IMR-90 (cell line): ENCODE measurements at regions of chr21 and their contacts with region 1.

Region 1: DNA sequence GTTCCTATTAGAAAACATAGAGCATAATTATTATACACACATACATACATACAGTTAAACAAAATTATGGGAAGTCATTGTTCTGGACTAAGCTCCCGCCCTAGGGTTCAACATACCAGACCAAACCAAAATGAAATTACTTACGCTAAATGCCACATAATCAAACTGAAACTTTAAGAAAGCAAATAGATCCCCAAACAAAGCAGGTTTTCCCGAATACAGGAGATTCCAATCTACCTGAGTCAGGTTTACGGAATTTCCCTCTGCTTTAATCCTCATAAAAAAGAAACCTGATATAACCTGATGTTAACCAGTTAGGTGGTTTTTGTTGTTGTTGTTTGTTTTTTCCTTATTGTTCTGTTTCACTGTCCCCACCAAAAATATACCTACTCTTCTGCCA is 1886.9 kb downstream of the NCAM2 start:
- DNase-seq: no peak
- ATAC-seq: no peak
- H3K4me3 ChIP-seq: no peak overlapping the region
- H3K27ac ChIP-seq: no peak overlapping the region
- H3K4me1 ChIP-seq: no peaks in the 10 kb centered on the region
- H3K27me3 ChIP-seq: no peaks in the 10 kb centered on the region
- CTCF ChIP-seq: no peak
- POLR2A ChIP-seq: no peak
- RAD21 ChIP-seq: no peak

Region 2: GRCh38 chr21:22791986-22792560 is 93.0 kb before region 1 on chr21:
- CTCF ChIA-PET with region 1: no interaction called
- POLR2A ChIA-PET with region 1: no interaction called
- dilution Hi-C with region 1: no loop called
- in situ Hi-C with region 1: loop called (anchors 25 kb)
- intact Hi-C with region 1: no loop called
- DNase-seq: peak; percentile 38
- ATAC-seq: no peak; the same call in 1 of the 2 replicates
- H3K4me3 ChIP-seq: no peak overlapping the region
- H3K27ac ChIP-seq: no peak overlapping the region
- H3K4me1 ChIP-seq: no peaks in the 10 kb centered on the region
- H3K27me3 ChIP-seq: no peaks in the 10 kb centered on the region
- CTCF ChIP-seq: peak; percentile 65
- POLR2A ChIP-seq: no peak
- RAD21 ChIP-seq: peak; percentile 55

Region 3: GRCh38 chr21:22842875-22843274 is 42.2 kb before region 1 on chr21:
- CTCF ChIA-PET with region 1: no interaction called
- POLR2A ChIA-PET with region 1: no interaction called
- dilution Hi-C with region 1: no loop called
- in situ Hi-C with region 1: no loop called
- intact Hi-C with region 1: no loop called
- DNase-seq: no peak
- ATAC-seq: no peak
- H3K4me3 ChIP-seq: no peak overlapping the region
- H3K27ac ChIP-seq: no peak overlapping the region
- H3K4me1 ChIP-seq: no peaks in the 10 kb centered on the region
- H3K27me3 ChIP-seq: no peaks in the 10 kb centered on the region
- CTCF ChIP-seq: no peak
- POLR2A ChIP-seq: no peak
- RAD21 ChIP-seq: no peak

Region 4: GRCh38 chr21:22981819-22982218 is 96.7 kb after region 1 on chr21:
- CTCF ChIA-PET with region 1: no interaction called
- POLR2A ChIA-PET with region 1: no interaction called
- dilution Hi-C with region 1: no loop called
- in situ Hi-C with region 1: no loop called
- intact Hi-C with region 1: no loop called
- DNase-seq: no peak
- ATAC-seq: no peak
- H3K4me3 ChIP-seq: no peak overlapping the region
- H3K27ac ChIP-seq: no peak overlapping the region
- H3K4me1 ChIP-seq: no peaks in the 10 kb centered on the region
- H3K27me3 ChIP-seq: no peaks in the 10 kb centered on the region
- CTCF ChIP-seq: no peak
- POLR2A ChIP-seq: no peak
- RAD21 ChIP-seq: no peak

Region 5: GRCh38 chr21:23977971-23978370 is 1092.9 kb after region 1 on chr21:
- CTCF ChIA-PET with region 1: no interaction called
- POLR2A ChIA-PET with region 1: no interaction called
- dilution Hi-C with region 1: no loop called
- in situ Hi-C with region 1: no loop called
- intact Hi-C with region 1: no loop called
- DNase-seq: no peak
- ATAC-seq: no peak
- H3K4me3 ChIP-seq: no peak overlapping the region
- H3K27ac ChIP-seq: no peak overlapping the region
- H3K4me1 ChIP-seq: no peaks in the 10 kb centered on the region
- H3K27me3 ChIP-seq: no peaks in the 10 kb centered on the region
- CTCF ChIP-seq: no peak
- POLR2A ChIP-seq: no peak
- RAD21 ChIP-seq: no peak